ENCODE measurements at regions of chr11 and their contacts with region 1.

Region 1: DNA sequence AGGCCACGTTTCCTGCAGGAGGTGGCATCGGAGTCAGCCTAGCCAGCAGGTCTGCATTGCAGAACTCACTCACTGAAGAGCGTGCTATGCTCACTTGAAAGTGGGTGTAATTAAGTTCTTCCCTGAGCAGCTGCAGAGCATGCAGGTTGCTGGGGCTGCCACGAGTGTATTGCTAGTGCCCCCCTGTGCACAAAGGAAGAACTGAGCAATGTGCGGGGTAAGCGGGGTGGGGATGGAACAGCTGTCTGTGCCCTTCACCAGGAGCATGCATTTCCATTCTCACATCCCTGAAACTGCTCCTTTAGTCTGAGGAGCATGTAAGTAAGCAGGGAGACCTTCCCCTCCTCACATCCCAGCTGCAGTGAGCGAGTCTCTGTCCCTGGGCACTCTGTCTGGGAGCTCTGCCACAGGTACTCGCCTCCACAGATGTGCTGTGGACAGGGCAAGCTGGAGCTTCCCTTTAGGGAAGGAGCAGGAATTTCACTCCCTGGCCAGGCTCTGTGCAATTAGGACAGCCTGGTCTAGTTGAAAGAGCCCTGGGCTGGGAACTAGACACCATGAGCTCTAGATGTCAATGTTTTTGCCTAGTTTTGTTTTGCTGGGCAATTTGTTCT is 1031.8 kb downstream of the NTM start:
- DNase-seq: peak; percentile 24
- ATAC-seq: peak; percentile 100
- H3K4me3 ChIP-seq: no peak overlapping the region
- H3K27ac ChIP-seq: no peak overlapping the region
- H3K4me1 ChIP-seq: no peaks in the 10 kb centered on the region
- H3K27me3 ChIP-seq: no peaks in the 10 kb centered on the region
- CTCF ChIP-seq: peak; percentile 82 to 85 (median 83)
- EP300 ChIP-seq: no peak
- POLR2A ChIP-seq: no peak
- RAD21 ChIP-seq: peak; percentile 97

Region 2: DNA sequence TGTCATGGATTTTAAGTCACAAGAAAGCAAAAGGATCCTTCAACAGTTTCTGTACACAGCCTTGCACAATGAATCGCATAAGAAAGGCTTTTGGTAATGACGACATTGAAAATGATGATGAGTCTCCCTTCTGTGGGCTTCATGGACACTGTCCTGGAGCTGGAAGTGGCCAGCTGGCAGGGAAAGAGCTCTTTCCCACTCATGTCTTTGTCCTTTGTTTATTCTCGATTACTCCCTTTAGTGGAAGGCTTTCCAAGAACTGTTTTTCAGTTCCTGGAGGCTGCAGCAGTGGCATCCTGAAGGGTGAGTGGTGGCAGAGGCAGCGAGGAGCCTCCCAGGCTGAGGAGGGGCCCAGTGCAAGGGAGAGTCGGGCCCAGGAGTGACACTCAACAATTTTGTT is 526.6 kb before region 1 on chr11:
- CTCF ChIA-PET with region 1: no interaction called
- POLR2A ChIA-PET with region 1: no interaction called
- RAD21 ChIA-PET with region 1: no interaction called
- SMC1A ChIA-PET with region 1: no interaction called
- in situ Hi-C with region 1: loop called (anchors 10 kb)
- intact Hi-C with region 1: no loop called
- DNase-seq: no peak
- ATAC-seq: no peak
- H3K4me3 ChIP-seq: no peak overlapping the region
- H3K27ac ChIP-seq: no peak overlapping the region
- H3K4me1 ChIP-seq: no peaks in the 10 kb centered on the region
- H3K27me3 ChIP-seq: no peaks in the 10 kb centered on the region
- CTCF ChIP-seq: no peak
- EP300 ChIP-seq: no peak
- POLR2A ChIP-seq: no peak
- RAD21 ChIP-seq: no peak

Region 3: DNA sequence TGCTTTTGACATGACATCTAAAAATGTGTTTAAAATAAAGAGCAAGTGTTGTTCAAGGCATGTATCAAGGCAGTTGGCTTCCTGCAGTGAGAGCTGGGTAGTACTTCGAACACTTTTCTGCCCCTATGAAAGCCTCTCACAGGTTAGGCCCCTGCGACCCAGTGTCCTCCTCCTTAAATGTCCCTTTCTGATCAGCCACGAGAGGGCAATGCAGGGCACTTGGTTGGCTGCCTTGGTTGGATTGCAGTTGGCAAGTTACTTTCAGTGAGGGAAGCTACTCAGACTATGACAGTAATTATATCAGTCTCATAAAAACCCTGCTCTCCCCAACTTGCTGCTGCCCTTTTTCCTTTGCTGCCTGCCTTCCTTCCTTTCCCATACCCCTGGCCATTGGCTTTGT is 288.0 kb before region 1 on chr11:
- CTCF ChIA-PET with region 1: interaction called, 5 read pairs
- POLR2A ChIA-PET with region 1: no interaction called
- RAD21 ChIA-PET with region 1: no interaction called
- SMC1A ChIA-PET with region 1: no interaction called
- in situ Hi-C with region 1: no loop called
- intact Hi-C with region 1: loop called (anchors 1 kb)
- DNase-seq: no peak
- ATAC-seq: peak; percentile 81
- H3K4me3 ChIP-seq: no peak overlapping the region
- H3K27ac ChIP-seq: no peak overlapping the region
- H3K4me1 ChIP-seq: no peaks in the 10 kb centered on the region
- H3K27me3 ChIP-seq: peaks cover 0 to 2% of the 10 kb centered on the region in 2 experiments; a peak in 1 of 4 replicates
- CTCF ChIP-seq: peak; percentile 34 to 53 (median 51)
- EP300 ChIP-seq: no peak
- POLR2A ChIP-seq: no peak
- RAD21 ChIP-seq: peak; percentile 58

Region 4: DNA sequence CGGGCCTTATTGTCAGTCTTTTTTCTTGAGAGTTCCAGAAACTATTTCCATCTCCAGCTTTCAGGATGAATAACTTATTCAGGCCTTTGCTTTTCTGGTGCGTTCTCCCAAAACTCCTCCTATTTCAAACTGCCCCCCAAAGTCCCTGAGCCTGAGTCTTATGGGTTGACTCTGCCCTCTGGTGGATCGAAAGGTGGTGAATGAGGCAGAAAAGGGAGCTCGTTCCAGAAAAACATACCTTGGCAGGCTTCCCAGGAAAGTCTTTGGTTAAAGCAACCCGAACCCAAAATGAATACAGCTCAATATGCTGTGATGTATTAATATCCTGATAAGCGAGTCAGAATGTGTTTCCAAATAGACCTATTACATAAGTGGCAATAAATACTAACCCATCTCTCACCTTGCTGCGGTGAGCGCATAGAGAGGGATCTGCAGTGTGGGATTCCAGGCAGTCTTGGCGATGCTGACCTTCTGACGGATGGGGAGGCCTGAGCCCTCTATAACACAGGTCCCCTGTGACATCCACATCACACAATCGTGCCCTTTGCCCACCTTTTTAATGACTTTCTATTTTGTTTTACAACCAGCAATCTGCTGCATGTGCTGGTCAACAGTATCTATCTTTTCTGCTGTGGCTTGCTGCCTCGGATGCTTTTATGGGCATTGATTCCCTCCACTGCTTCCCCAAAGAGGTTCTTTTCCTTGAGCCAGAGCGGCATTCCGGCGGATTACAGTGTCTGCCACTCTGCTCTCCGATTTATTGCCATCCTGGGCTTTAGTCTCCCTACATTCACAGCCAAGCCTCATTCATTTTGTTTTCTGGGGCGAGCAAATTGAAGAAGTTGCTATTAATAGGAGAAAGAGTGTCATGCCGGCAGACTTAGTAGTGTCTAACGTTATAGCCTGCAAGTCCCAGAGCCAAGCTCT is 274.9 kb before region 1 on chr11:
- CTCF ChIA-PET with region 1: interaction called, 3 read pairs
- POLR2A ChIA-PET with region 1: no interaction called
- RAD21 ChIA-PET with region 1: interaction called, 8 read pairs
- SMC1A ChIA-PET with region 1: no interaction called
- in situ Hi-C with region 1: no loop called
- intact Hi-C with region 1: loop called (anchors 5 kb)
- DNase-seq: no peak
- ATAC-seq: peak; percentile 30; the same call in 1 of the 3 replicates
- H3K4me3 ChIP-seq: no peak overlapping the region
- H3K27ac ChIP-seq: no peak overlapping the region
- H3K4me1 ChIP-seq: peaks cover 3% of the 10 kb centered on the region
- H3K27me3 ChIP-seq: no peaks in the 10 kb centered on the region; a peak in 2 of 4 replicates
- CTCF ChIP-seq: peak; percentile 35 to 57 (median 46); a peak in 4 of 6 replicates
- EP300 ChIP-seq: no peak
- POLR2A ChIP-seq: no peak
- RAD21 ChIP-seq: peak; percentile 78

Region 5: DNA sequence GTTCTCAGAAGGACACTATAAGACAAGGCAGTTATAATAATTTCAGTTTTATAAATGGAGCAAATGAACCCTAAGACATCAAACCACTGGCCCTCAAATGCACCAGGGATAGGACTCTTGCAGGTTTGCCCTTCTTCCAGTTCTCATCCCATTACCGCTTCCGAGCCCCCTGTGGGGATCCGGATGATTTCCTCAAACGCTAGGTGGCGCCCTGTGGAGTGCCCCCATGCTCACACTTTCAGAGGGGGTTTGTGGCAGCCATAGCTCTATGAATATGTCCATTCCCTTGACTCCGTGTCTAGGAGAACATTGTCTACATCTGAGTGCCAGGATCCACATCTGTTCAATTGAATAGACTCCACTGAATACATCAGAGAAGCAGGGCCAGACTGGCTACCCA is 215.5 kb before region 1 on chr11:
- CTCF ChIA-PET with region 1: interaction called, 12 read pairs
- POLR2A ChIA-PET with region 1: no interaction called
- RAD21 ChIA-PET with region 1: no interaction called
- SMC1A ChIA-PET with region 1: interaction called, 3 read pairs
- in situ Hi-C with region 1: no loop called
- intact Hi-C with region 1: loop called (anchors 2 kb)
- DNase-seq: no peak
- ATAC-seq: no peak
- H3K4me3 ChIP-seq: no peak overlapping the region
- H3K27ac ChIP-seq: no peak overlapping the region
- H3K4me1 ChIP-seq: no peaks in the 10 kb centered on the region
- H3K27me3 ChIP-seq: peaks cover 0 to 1% of the 10 kb centered on the region in 2 experiments; a peak in 2 of 4 replicates
- CTCF ChIP-seq: peak; percentile 20 to 48 (median 35); a peak in 5 of 6 replicates
- EP300 ChIP-seq: no peak
- POLR2A ChIP-seq: no peak
- RAD21 ChIP-seq: 0 out of 2 replicates have a peak, but pooled peaks have one; percentile 19

Region 6: GRCh38 chr11:132278801-132279574 is 123.2 kb before region 1 on chr11:
- CTCF ChIA-PET with region 1: interaction called, 21 read pairs
- POLR2A ChIA-PET with region 1: interaction called, 3 read pairs
- RAD21 ChIA-PET with region 1: interaction called, 19 read pairs
- SMC1A ChIA-PET with region 1: interaction called, 13 read pairs
- in situ Hi-C with region 1: loop called (anchors 10 kb)
- intact Hi-C with region 1: loop called (anchors 1 kb)
- DNase-seq: peak; percentile 4
- ATAC-seq: peak; percentile 90
- H3K4me3 ChIP-seq: no peak overlapping the region
- H3K27ac ChIP-seq: no peak overlapping the region
- H3K4me1 ChIP-seq: no peaks in the 10 kb centered on the region
- H3K27me3 ChIP-seq: no peaks in the 10 kb centered on the region
- CTCF ChIP-seq: peak; percentile 60 to 71 (median 64)
- EP300 ChIP-seq: no peak
- POLR2A ChIP-seq: no peak
- RAD21 ChIP-seq: peak; percentile 89

Region 7: GRCh38 chr11:132357811-132358572 is 44.2 kb before region 1 on chr11:
- CTCF ChIA-PET with region 1: no interaction called
- POLR2A ChIA-PET with region 1: no interaction called
- RAD21 ChIA-PET with region 1: no interaction called
- SMC1A ChIA-PET with region 1: no interaction called
- in situ Hi-C with region 1: no loop called
- intact Hi-C with region 1: loop called (anchors 1 kb)
- DNase-seq: peak; percentile 91
- ATAC-seq: peak; percentile 88
- H3K4me3 ChIP-seq: peak overlapping the region; percentile 51
- H3K27ac ChIP-seq: peak overlapping the region; percentile 91
- H3K4me1 ChIP-seq: peaks cover 44% of the 10 kb centered on the region
- H3K27me3 ChIP-seq: no peaks in the 10 kb centered on the region
- CTCF ChIP-seq: no peak
- EP300 ChIP-seq: peak; percentile 64 to 95
- POLR2A ChIP-seq: no peak
- RAD21 ChIP-seq: no peak

Measured in GM12878 (cell line).